Posterior vena cava (tissue), 2 donors: ENCODE measurements at regions of chr2 and their contacts with region 1.

Region 1: DNA sequence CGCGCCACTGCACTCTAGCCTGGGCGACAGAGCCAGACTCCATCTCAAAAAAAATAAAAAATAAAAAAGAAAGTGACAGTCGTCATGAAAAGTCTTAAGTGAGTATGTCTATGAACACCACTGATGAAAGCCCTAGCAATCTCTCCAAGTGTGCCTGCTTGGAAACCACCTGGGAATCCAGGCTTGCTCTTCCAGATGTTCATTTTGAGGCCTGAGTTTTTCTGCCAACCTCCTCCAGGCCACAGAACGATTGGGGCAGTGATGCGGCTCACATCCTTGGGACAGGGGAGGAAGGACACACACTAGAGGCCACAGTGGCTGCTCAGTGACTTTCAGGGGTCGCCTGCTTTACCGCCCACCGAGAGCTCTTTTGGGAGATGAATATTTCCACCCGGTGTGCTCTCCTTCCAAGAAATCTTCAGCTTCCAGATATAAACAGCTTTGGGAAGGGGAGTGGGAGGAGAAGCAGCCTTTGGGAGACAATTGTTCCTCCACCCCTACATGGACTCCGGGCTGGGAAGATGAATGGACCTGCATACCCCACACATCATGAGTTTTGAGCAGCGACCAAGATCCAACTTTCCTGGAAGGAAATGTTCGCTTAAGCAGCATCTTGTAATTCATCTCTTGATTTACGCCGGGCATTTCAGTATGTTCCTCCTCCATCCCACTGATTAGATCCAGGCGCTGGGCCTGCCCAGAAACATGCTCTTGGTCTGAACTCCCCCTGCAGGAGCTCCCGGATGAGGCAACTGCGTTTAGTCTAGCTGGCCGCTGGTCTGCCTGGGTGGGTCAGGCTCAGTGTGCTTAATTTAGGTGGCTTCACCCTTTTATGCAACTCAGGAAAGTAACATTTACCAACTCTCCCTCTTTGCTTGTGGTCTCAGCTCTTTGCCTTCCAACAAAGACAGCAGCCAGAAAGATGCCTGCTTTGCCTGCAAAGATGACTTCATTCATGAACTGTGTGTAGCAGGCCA is 6.2 kb upstream of the ARMC9 start:
- DNase-seq: peak; percentile 95

Region 2: DNA sequence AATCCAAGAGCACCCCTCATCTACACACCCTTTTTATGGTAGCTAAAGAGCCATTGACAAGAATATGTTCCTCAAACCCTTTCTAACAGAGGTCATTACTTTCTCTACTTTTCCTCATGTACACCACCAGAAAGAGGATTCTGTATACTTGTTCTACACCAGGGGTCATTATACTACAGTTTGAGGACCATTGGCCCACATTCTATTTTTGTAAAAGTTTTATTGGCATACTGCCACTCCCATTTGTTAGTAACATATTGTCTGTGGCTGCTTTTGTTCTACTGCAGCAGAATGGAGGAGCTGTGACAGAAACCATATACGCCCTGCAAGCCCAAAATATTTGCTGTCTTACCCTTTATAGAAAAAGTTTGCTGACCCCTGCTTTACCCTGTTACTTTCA is 81.6 kb before region 1 on chr2:
- intact Hi-C with region 1: loop called (anchors 5 kb)
- DNase-seq: no peak

Region 3: GRCh38 chr2:231163696-231164095 is 28.5 kb before region 1 on chr2:
- intact Hi-C with region 1: loop called in 1 of 2 experiments (anchors 1 kb)
- DNase-seq: no peak

Region 4: DNA sequence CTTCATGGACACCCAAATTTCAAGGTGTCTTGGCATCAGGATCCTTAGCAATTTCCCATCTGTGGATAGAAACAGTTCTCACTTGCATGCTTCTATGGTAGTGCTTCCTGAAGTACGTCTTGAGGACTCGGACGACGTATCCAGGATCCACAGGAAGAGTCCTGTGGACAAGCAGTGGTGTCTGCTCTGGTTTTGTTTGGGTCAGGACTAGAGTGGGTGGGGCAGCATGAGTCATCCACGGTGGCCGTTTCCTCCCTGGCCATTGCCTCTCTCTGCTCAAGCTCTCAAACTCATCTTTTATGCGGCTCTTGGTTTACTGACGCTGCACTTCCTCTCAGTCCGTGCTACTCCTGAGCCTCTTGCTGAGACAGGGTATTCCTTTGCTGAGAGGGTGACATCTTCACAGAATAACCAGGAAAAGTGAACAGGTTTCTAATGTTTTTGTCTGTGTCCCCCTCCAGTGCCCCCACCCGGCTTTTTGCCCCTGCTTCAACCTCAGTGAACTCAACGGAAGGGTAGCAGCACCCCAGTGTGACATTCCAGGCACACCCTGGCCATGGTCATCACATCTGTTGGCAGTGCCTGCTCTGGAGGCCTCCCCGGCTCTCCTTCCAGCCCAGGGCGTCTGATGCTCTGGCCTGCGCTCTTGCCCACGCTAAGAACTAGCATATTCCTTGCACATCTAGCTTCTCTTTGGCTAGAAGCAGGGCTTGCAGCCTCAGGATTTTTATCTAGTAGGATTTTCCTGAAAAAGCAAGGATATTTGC is 68.4 kb after region 1 on chr2:
- intact Hi-C with region 1: no loop called
- DNase-seq: no peak